ENCODE measurements at regions of chr12 and their contacts with region 1.

Region 1: GRCh38 chr12:29858270-29858786 is 74.6 kb upstream of the TMTC1 start:
- DNase-seq: no peak
- H3K4me3 ChIP-seq: no peak overlapping the region
- H3K27ac ChIP-seq: no peak overlapping the region
- H3K4me1 ChIP-seq: no peaks in the 10 kb centered on the region
- H3K27me3 ChIP-seq: no peaks in the 10 kb centered on the region
- CTCF ChIP-seq: no peak
- POLR2A ChIP-seq: no peak

Region 2: DNA sequence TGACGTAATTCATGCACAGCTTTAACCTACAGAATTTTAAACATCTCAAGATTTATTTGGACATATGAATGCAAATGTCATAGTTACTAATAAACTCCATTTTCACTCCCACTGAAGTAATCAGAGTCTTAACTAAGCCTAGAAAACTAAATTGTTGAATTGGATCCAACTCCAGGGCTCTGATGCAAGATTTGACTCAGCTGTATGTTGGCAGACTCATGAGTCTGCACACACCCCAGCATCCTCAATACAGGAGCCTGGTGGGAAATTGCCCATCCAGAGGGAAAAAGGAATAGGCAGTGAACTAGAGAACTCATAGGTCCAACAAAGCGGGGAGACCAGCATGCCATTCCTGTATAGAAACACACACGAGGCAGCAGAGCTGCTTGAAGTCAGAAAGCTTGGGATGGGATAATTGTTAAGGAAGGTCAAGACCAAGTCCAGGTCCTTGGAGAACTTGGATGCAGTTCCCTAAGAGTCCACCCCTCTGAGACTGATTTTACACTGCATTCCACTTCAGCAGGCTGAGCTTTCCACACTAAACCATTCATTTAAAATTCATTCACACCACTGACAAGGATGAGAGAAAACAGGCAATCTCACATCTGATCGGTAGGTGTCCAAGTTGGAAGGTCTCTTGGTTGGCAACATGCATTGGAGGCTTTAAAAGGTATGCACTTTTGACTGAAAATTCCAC is 89.0 kb before region 1 on chr12:
- CTCF ChIA-PET with region 1: no interaction called
- POLR2A ChIA-PET with region 1: interaction called, 10 read pairs
- dilution Hi-C with region 1: no loop called
- intact Hi-C with region 1: no loop called
- DNase-seq: no peak
- H3K4me3 ChIP-seq: no peak overlapping the region
- H3K27ac ChIP-seq: no peak overlapping the region
- H3K4me1 ChIP-seq: no peaks in the 10 kb centered on the region
- H3K27me3 ChIP-seq: no peaks in the 10 kb centered on the region
- CTCF ChIP-seq: no peak
- POLR2A ChIP-seq: no peak

Region 3: DNA sequence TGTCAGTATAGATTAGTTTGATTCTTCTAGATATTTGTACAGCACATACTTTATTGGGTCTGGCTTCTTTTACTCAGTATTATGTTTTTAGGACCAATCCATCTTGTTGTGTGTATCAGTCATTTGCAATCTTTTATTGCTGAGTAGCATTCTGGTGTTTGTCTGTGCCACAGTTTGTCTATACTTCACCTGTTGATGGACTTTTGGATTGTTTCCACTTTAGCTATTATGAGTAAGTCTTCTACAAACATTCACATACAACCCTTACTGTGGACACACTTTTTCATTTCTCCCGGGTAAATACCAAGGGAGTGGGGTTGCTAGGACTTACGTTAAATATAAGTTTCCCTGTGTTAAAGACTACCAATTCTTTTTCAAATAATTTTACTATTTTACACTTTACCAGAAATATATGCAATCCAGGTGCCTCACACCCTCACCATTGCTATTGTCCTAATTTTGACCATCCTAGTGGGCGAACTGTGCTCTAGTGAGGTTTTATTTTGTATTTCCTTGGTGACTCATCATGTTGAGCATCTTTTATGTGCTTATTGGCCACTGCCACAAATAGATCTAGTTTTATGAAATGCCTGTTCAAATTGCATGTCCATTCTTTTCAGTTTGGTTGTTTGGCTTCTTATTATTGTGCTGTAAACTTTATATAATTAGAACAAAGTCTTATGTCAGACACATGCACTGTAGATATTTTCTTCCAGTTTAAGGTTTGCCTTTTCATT is 230.1 kb after region 1 on chr12:
- CTCF ChIA-PET with region 1: no interaction called
- POLR2A ChIA-PET with region 1: no interaction called
- dilution Hi-C with region 1: no loop called
- intact Hi-C with region 1: no loop called
- DNase-seq: no peak
- H3K4me3 ChIP-seq: no peak overlapping the region
- H3K27ac ChIP-seq: no peak overlapping the region
- H3K4me1 ChIP-seq: no peaks in the 10 kb centered on the region
- H3K27me3 ChIP-seq: no peaks in the 10 kb centered on the region
- CTCF ChIP-seq: no peak
- POLR2A ChIP-seq: no peak

Measured in endothelial cell of umbilical vein (primary cell).